ENCODE measurements at regions of chr12 and their contacts with region 1.

Region 1: DNA sequence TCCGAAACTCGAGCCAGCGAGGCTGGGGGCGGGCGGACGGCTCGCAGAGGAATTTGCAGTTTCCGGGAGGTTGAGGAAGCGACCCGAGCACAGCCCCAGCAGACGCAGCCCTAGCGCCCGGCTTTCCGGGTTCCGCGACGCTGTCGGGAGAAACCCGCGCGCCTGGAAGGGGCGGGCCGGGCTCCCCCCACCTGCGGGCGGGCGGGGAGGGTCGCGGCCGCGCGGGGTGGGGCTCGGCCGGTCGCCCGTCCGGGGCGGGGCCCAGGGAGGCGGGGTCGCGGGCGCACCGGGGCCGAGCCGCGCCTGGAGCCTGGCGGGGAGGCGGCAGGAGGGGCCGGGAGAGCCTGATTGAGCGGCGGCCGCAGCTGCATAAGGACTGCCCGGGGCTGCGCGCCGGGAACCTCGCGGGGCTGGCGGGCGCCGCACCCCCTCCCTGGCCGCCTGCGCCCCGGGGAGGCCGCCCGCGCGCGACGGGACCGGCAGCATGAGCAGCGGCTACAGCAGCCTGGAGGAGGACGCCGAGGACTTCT is at the start of gene RASSF3:
- DNase-seq: peak; percentile 85
- ATAC-seq: peak; percentile 63
- H3K4me3 Mint-ChIP-seq: peak within 1 kb of the TSS; percentile 80
- H3K27ac Mint-ChIP-seq: peak within 1 kb of the TSS; percentile 92
- H3K4me1 Mint-ChIP-seq: peaks cover 36% of the 10 kb centered on the region
- H3K27me3 Mint-ChIP-seq: no peaks in the 10 kb centered on the region
- total RNA-seq, gene RASSF3: 38.0 to 39.0 TPM

Region 2: DNA sequence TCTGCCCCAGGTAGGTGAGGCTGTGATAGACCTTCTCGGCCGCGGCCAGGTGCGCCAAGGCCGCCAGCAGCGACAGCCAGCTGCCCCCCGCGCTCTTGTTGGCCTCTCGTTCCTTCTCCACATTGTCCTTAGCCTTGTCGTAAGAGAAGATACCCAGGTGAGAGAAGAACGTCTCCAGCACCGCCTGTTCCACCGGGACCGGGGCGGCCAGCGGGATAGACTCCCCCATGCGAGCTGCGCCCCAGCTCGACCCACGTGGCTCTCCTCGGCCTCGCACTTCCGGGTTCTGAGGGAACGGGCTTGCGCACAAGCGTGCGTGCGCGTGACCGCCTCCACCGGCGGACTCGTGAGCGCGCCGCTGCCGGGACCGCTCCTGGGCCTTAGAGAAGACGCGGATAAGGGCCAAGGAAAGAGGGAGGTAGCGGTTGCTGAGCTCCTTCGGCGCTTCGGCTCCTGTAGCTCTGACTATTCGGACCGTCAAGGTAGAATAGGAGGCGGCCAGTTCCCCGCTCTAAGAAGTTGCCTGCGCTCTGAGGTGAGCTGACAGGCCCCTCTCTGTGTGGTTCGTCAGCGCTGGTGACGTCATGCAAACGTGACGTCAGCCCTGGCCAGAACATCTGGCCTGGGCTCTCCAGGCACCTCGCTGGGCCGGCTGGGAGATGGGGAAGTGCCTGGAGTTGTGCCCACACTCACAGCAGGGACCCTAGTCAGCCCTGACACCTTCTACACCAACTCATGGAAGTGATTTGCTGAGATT is 388.0 kb before region 1 on chr12 and contains the start of gene KICS2:
- CTCF ChIA-PET with region 1: no interaction called
- POLR2A ChIA-PET with region 1: no interaction called
- intact Hi-C with region 1: loop called in 1 of 2 experiments (anchors 5 kb)
- DNase-seq: peak; percentile 95
- ATAC-seq: peak; percentile 92
- H3K4me3 Mint-ChIP-seq: peak within 1 kb of the TSS; percentile 92
- H3K27ac Mint-ChIP-seq: peak within 1 kb of the TSS; percentile 96
- H3K4me1 Mint-ChIP-seq: peaks cover 30% of the 10 kb centered on the region
- H3K27me3 Mint-ChIP-seq: peaks cover 4% of the 10 kb centered on the region
- total RNA-seq, gene KICS2: 15.1 to 16.6 TPM

Region 3: DNA sequence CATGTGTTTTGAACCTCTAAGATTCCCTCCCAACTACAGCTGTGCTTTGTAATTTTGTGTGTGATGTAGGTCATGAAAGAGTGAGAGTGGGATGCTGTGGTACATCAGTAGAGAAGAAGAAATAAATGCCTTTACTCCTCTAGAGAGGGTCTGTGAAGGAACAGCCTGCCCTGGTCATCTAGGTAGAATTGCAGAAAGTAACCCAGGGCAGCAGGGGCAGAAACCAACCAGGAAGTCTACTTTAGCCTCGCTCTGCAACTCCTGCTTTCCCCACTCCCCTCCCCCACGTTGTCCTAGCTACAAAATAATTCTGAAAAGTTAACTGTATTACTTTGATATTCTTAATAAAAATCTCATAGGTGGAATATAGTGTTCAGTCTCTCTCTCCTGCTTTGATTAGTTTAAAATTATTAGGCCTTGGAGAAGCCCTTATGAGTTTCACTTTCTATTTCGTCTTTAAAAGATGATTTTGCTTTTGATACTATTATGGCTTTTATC is 150.8 kb before region 1 on chr12:
- CTCF ChIA-PET with region 1: no interaction called
- POLR2A ChIA-PET with region 1: no interaction called
- intact Hi-C with region 1: loop called in 1 of 2 experiments (anchors 5 kb)
- DNase-seq: peak; percentile 21
- ATAC-seq: no peak
- H3K4me3 Mint-ChIP-seq: peak overlapping the region; percentile 70
- H3K27ac Mint-ChIP-seq: peak overlapping the region; percentile 97
- H3K4me1 Mint-ChIP-seq: peaks cover 35% of the 10 kb centered on the region
- H3K27me3 Mint-ChIP-seq: no peaks in the 10 kb centered on the region

Region 4: DNA sequence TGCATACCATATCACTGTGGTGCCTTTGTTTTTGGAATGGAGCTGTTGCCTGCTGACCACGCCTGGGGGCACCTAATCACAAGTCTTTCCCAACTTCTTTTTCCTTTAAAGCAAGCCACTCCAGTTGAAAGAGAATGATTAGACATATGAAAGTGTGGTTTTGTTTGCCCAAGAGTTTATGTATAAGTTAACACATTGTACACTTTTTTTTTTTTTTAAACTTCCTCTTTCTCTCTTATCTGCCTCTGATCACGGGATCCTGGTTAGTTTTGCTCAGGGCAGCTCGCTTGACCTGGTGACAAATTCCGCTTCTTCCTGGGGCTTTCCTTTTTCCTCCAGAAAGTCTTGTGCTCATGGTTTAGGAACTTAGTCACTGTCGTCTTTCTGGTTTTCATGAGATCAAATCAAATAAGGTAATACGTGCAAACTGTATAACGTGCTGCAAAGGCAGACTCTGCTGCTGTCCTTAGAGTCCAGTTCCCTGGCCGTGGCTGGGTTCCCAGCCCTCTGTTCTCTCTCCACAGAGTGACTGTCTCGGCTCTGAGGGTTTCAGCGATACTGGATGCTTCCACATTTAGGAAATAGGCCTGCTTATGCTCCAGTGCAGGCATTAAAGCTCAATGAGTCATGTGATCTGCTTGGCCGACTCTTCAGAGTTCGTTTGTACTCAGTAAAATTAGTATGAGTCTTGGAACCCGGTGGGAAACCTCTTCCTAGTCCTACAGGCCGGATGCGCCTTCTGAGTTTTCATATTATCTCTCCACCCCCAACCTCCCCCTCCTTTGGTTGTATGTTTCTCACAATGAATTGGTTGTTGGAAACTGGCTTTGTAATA is 15.2 kb after region 1 on chr12:
- CTCF ChIA-PET with region 1: interaction called, 4 read pairs
- POLR2A ChIA-PET with region 1: no interaction called
- intact Hi-C with region 1: loop called in 1 of 2 experiments (anchors 1 kb)
- DNase-seq: peak; percentile 58
- ATAC-seq: peak; percentile 93
- H3K4me3 Mint-ChIP-seq: peak overlapping the region; percentile 68
- H3K27ac Mint-ChIP-seq: peak overlapping the region; percentile 97
- H3K4me1 Mint-ChIP-seq: peaks cover 72% of the 10 kb centered on the region
- H3K27me3 Mint-ChIP-seq: no peaks in the 10 kb centered on the region

Region 5: GRCh38 chr12:64696080-64696741 is 86.0 kb after region 1 on chr12:
- CTCF ChIA-PET with region 1: interaction called, 32 read pairs
- POLR2A ChIA-PET with region 1: interaction called, 4 read pairs
- intact Hi-C with region 1: loop called (anchors 1 to 2 kb)
- DNase-seq: no peak
- ATAC-seq: no peak
- H3K4me3 Mint-ChIP-seq: no peak overlapping the region
- H3K27ac Mint-ChIP-seq: no peak overlapping the region
- H3K4me1 Mint-ChIP-seq: peaks cover 75% of the 10 kb centered on the region
- H3K27me3 Mint-ChIP-seq: no peaks in the 10 kb centered on the region

Region 6: GRCh38 chr12:66301944-66302826 is 1692.0 kb after region 1 on chr12 and contains the start of gene HELB:
- CTCF ChIA-PET with region 1: no interaction called
- POLR2A ChIA-PET with region 1: no interaction called
- intact Hi-C with region 1: loop called in 1 of 2 experiments (anchors 5 kb)
- DNase-seq: peak; percentile 99
- ATAC-seq: peak; percentile 83
- H3K4me3 Mint-ChIP-seq: peak within 1 kb of the TSS; percentile 96
- H3K27ac Mint-ChIP-seq: peak within 1 kb of the TSS; percentile 100
- H3K4me1 Mint-ChIP-seq: peaks cover 39% of the 10 kb centered on the region
- H3K27me3 Mint-ChIP-seq: no peaks in the 10 kb centered on the region
- total RNA-seq, gene HELB: 21.0 to 23.6 TPM

Measured in activated CD4-positive, alpha-beta T cell treated with anti-CD3 and anti-CD28 coated beads for 36 hours (primary cell).